ENCODE measurements at regions of chr6 and their contacts with region 1.

Region 1: GRCh38 chr6:33711140-33712129 is at the start of gene UQCC2:
- DNase-seq: peak; percentile 99
- ATAC-seq: peak; percentile 99
- H3K4me3 Mint-ChIP-seq: peak within 1 kb of the TSS; percentile 90
- H3K27ac Mint-ChIP-seq: peak within 1 kb of the TSS; percentile 96
- H3K4me1 Mint-ChIP-seq: peaks cover 34% of the 10 kb centered on the region
- H3K27me3 Mint-ChIP-seq: no peaks in the 10 kb centered on the region
- total RNA-seq, gene UQCC2: 141 to 147 TPM

Region 2: GRCh38 chr6:33417903-33418689 is 293.3 kb before region 1 on chr6 and contains the start of gene CUTA:
- CTCF ChIA-PET with region 1: no interaction called
- POLR2A ChIA-PET with region 1: no interaction called
- intact Hi-C with region 1: loop called in 1 of 2 experiments (anchors 2 kb)
- DNase-seq: peak; percentile 100
- ATAC-seq: peak; percentile 87
- H3K4me3 Mint-ChIP-seq: peak within 1 kb of the TSS; percentile 96
- H3K27ac Mint-ChIP-seq: peak within 1 kb of the TSS; percentile 98
- H3K4me1 Mint-ChIP-seq: peaks cover 54% of the 10 kb centered on the region
- H3K27me3 Mint-ChIP-seq: no peaks in the 10 kb centered on the region
- total RNA-seq, gene CUTA: 154 to 188 TPM

Region 3: DNA sequence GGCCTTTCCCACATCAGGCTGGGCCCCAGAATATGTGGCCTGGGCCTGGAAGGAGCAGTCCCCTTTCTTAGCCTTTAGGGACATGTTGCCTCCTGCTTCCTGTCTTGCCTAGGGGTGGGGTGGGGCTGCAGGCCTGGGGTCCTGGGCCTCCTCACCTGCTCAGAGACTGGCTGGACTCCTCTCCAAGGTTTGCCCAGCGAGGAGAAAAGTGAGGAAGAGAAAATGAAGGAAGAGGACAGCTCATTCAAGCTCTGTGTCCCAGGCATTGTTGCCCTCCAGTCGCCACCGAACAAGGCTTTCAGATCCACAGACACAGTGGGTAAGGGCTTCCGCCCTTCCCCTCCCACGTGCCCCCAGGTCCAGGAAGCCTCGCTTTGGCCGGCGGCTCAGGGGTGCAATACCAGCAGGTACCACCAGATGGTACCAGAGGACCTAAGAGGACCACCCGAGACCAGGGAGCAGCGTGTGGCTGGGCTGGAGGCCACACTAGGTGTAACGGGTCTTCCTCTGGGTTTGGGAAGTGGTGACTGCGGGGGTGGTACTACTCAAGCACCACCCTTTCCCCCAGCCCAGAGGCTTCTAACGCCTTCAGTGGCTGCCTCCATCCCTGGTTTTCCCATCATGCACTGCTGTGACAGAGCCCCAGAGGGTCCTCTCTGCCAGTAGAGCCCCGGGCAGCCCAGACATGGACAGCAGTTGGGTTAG is 125.9 kb before region 1 on chr6:
- CTCF ChIA-PET with region 1: interaction called, 11 read pairs
- POLR2A ChIA-PET with region 1: no interaction called
- intact Hi-C with region 1: loop called in 1 of 2 experiments (anchors 2 kb)
- DNase-seq: peak; percentile 93
- ATAC-seq: peak; percentile 85
- H3K4me3 Mint-ChIP-seq: peak overlapping the region; percentile 66
- H3K27ac Mint-ChIP-seq: peak overlapping the region; percentile 92
- H3K4me1 Mint-ChIP-seq: peaks cover 22% of the 10 kb centered on the region
- H3K27me3 Mint-ChIP-seq: no peaks in the 10 kb centered on the region

Region 4: DNA sequence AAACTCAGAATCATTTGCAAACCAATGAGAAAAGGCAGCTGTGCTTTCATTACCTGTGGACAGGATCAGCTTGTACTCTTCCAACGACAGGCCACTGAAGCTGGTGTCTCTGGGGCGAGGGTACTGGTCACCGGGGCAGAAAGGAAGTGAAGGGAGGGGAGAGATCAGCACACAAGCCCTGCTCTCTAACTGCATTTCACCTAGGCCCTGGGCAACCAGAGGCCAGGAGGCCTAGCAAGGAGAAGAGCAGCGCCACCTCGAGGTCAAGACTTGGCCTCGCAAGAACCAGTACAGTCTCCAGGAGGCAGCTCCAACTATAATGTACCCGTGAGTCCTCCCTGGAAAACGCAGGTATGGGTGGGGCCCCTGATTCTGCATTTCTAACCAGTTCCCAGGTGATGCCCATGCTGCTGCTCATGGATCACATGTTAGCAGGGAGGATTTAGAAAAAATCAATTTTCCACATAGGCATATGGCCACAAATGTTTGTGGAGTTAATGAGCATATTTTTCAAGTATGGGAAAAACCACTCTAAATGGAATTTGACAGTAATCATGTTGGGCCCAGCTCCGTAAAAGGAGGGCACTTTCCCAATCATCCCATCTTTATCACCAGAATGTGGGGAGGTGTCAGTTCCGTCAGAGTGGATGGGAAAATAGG is 10.9 kb before region 1 on chr6:
- CTCF ChIA-PET with region 1: interaction called, 40 read pairs
- POLR2A ChIA-PET with region 1: interaction called, 4 read pairs
- intact Hi-C with region 1: no loop called
- DNase-seq: peak; percentile 90
- ATAC-seq: peak; percentile 89
- H3K4me3 Mint-ChIP-seq: no peak overlapping the region
- H3K27ac Mint-ChIP-seq: peak overlapping the region; percentile 35
- H3K4me1 Mint-ChIP-seq: peaks cover 47% of the 10 kb centered on the region
- H3K27me3 Mint-ChIP-seq: no peaks in the 10 kb centered on the region

Region 5: DNA sequence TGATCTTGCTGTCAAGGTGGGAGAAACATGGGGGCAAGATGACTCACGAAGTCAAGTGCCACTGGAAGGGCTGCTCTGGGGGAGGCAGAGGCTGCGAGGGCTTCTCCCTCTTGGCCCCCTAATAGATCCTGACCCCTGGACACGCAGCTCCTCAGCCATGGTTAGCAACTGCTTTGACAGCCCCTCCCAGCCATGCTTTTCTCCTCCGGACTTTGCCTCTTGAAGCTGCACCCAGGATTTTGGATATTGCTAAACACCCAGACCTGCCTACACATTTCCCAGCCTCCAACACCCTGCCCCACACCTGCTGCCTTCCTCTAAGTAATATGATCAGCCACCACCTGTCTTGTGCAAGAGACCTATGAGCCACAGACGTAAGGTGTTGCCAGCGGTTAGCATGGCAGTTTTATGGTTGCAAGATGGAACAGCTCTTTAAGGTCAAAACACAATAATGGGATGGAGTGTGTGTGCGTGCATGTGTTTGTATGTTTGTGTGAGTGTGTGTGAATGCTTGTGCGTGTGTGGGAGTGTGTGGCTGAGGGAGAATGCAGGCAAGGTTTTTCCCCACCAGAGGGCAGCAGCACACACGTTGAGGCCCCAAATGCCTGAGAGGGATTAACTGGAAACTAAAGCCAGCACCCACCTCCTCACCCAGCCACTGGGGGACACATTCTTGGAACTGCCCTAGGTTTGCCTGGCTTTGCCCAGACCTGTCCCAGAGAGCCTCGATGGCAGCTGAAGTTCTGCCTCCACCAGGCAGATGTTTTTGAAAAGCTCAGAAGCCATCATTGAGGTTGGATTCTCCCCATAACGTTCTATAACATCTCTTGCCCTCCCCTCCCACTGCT is 32.8 kb after region 1 on chr6:
- CTCF ChIA-PET with region 1: interaction called, 15 read pairs
- POLR2A ChIA-PET with region 1: no interaction called
- intact Hi-C with region 1: loop called in 1 of 2 experiments (anchors 1 kb)
- DNase-seq: peak; percentile 85
- ATAC-seq: peak; percentile 89
- H3K4me3 Mint-ChIP-seq: no peak overlapping the region
- H3K27ac Mint-ChIP-seq: no peak overlapping the region
- H3K4me1 Mint-ChIP-seq: no peaks in the 10 kb centered on the region
- H3K27me3 Mint-ChIP-seq: no peaks in the 10 kb centered on the region

Region 6: DNA sequence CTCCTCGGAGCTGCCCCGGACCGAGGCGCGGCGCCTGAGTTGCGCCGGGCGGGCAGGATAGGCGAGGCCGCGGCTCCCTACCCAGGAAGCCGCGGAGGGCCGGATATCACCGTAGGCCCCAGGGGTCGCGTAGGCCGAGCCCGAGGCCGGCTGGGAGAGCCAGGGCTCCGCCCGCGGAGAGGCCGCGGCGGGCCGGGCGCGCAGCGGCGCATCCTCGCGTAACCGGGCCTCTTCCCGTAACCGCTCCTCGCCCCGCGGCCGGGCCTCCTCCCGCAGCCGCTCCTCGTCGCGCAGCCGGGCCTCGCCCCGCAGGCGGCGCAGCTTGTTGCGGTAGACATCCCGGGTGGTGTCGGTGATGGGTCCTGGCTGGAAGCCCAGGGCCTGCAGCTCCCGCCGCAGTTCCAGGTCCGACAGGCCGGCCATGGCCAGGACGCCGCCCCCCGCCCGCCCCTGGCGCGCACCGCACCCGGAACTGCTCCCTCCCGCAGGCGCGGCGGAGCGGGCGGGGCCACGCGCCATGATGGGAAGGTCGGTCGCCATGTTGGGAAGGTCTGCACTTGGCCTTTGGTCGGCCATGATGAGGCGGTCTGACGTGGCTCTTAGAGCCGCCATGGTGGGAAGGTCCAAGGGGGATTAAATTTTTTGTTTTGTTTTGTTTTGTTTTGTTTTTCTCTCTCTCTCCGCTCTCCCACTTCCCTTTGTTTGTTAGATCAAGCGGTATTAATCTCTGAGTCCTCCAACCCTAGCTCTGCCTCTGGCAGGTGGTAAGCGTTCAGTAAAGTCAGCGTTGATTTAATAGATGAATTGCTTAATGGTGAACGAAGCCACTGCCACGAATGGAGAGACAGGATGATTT is 77.5 kb after region 1 on chr6 and contains the start of gene LEMD2:
- CTCF ChIA-PET with region 1: interaction called, 3 read pairs
- POLR2A ChIA-PET with region 1: interaction called, 5 read pairs
- intact Hi-C with region 1: loop called (anchors 1 kb)
- DNase-seq: peak; percentile 93
- ATAC-seq: peak; percentile 87
- H3K4me3 Mint-ChIP-seq: peak within 1 kb of the TSS; percentile 96
- H3K27ac Mint-ChIP-seq: peak within 1 kb of the TSS; percentile 99
- H3K4me1 Mint-ChIP-seq: peaks cover 47% of the 10 kb centered on the region
- H3K27me3 Mint-ChIP-seq: no peaks in the 10 kb centered on the region
- total RNA-seq, gene LEMD2: 55.2 to 61.5 TPM

Measured in activated CD4-positive, alpha-beta T cell treated with anti-CD3 and anti-CD28 coated beads for 36 hours (primary cell).